ENCODE measurements at regions of chr17 and their contacts with region 1.

Region 1: DNA sequence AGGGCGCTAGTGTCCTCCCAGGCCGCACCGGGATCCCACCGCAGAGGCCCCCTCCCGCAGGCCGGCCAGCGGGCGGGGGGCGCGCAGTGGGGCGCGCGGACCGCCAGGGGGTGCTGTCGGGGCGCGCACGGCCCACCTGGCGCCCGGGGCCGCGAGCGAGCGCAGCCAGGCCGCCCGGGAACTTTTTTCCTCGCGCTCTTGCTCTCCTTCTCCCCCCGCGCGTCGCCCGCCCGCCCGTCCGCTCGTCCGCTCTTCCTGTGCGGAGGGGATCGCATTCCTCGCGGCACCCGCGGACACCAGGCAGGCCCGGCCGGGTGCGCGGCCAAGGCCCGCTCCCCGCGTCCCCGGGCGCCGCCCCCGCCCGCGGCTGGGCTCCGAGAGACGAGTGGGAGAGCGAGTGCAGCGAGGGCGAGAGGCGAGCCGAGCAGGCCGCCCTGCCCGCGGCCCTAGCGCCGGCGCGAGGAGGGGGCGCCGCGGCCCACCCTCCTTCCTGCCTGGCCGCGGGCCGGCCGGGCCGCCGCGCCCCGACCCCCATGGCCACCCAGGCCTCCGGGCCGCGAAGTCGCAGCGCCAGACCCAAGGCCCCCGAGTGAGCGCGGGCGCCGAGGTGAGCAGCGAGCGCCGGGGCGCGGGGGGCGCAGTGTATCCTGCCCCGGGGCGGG is at the start of gene RAI1:
- DNase-seq: peak; percentile 79
- ATAC-seq: peak; percentile 56
- H3K4me3 ChIP-seq: peak within 1 kb of the TSS; percentile 70
- H3K27ac ChIP-seq: peak within 1 kb of the TSS; percentile 81
- H3K4me1 ChIP-seq: peaks cover 18% of the 10 kb centered on the region
- H3K27me3 ChIP-seq: no peaks in the 10 kb centered on the region
- CTCF ChIP-seq: peak; percentile 83
- POLR2A ChIP-seq: peak; percentile 72
- RAD21 ChIP-seq: peak; percentile 80
- total RNA-seq, gene RAI1: 1.8 and 1.9 TPM in 2 replicates

Region 2: DNA sequence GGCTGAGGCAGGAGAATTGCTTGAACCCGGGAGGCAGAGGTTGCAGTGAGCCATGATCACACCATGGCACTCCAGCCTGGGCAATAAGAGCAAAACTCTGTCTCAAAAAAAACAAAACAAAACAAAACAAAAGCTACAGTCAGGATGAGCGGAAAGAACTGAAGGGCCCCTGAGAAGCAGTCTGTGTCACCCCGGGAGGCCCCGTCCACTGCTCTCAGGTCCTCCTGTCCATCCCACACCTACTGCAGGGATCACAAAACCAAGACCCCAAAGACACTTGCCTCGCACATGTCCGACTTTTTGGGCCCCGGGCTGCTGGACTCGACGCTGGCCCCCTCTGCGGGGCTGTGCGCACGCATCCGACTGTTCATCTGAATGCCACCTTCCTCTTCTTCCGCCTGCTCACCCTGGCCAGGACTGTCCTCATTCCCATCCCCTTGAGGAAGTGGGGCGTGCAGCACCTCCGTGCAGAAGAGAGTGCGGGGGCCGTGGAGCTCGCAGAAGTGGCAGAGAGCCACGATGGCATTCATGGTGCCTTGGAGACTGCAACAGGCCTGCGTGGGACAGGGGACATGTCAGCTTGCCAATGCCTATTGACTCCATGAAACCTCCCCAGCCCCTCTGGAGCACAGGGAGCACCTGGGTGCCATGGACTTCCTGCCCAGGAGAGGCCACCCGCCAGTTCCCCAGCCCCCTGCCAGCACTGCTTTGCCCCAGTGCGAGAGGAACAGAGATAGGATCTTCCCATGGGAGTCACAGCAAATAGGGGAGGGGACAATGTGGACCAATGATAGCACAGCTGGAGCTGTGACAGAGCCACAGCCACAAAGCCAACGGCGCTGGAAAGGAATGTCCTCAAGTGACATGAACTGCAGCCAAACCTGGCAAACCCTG is 453.5 kb before region 1 on chr17:
- CTCF ChIA-PET with region 1: no interaction called
- POLR2A ChIA-PET with region 1: no interaction called
- dilution Hi-C with region 1: no loop called
- in situ Hi-C with region 1: no loop called
- intact Hi-C with region 1: no loop called
- DNase-seq: no peak
- ATAC-seq: no peak
- H3K4me3 ChIP-seq: no peak overlapping the region
- H3K27ac ChIP-seq: no peak overlapping the region
- H3K4me1 ChIP-seq: no peaks in the 10 kb centered on the region
- H3K27me3 ChIP-seq: no peaks in the 10 kb centered on the region
- CTCF ChIP-seq: no peak
- POLR2A ChIP-seq: no peak
- RAD21 ChIP-seq: no peak

Region 3: DNA sequence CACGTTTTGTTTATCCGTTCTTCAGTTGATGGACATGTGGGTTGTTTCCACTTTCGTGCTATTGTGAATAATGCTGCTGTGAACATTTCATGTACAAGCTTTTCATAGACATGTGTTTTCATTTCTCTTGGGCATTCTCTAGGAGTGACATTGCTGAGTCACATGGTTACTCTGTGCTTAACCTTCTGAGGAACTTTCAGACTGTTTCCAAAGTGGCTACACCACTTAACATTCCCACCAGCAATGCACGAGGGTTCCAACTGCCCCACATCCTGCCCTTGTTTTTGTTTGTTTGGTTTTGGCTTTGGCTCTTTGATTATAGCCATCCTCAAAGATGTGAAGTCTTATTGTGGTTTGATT is 75.6 kb before region 1 on chr17:
- CTCF ChIA-PET with region 1: no interaction called
- POLR2A ChIA-PET with region 1: no interaction called
- dilution Hi-C with region 1: no loop called
- in situ Hi-C with region 1: no loop called
- intact Hi-C with region 1: no loop called
- DNase-seq: peak; percentile 58
- ATAC-seq: peak; percentile 62
- H3K4me3 ChIP-seq: no peak overlapping the region
- H3K27ac ChIP-seq: no peak overlapping the region
- H3K4me1 ChIP-seq: peaks cover 4% of the 10 kb centered on the region
- H3K27me3 ChIP-seq: peaks cover 7% of the 10 kb centered on the region; the same call in 1 of the 2 replicates
- CTCF ChIP-seq: no peak
- POLR2A ChIP-seq: no peak
- RAD21 ChIP-seq: no peak

Region 4: DNA sequence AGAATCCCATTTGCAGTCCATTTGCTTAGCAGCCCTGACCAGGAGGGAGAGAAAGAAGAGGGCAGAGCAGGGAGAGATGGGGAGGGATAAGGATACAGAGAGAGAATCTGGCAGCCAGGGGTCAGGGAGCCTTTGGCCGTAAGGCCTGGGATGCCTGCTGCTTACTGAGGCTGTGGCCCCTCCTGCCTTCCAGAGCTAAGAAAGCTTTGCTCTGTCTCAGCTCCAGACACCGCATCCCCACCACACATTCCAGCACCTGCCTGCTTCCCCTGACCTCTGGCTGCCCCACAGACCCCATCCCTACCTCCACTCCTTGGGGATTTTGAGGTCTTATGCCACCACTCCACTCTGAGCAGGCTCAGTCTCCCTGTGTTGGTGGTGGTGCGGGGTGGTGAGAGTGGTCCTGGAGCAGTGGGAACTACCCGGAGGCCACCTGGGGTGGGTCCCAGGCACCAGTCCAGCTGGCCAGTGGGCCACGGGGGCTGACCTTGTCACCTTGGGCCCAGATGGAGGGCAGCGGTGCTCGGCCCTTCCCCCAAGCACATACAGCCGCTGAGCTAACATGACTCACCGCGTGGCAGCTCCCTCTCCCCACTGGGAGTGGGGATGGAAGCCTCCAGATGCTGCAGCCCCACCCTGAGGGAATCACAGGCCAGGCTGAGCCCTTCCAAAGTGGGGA is 58.2 kb after region 1 on chr17:
- CTCF ChIA-PET with region 1: no interaction called
- POLR2A ChIA-PET with region 1: no interaction called
- dilution Hi-C with region 1: no loop called
- in situ Hi-C with region 1: no loop called
- intact Hi-C with region 1: loop called (anchors 5 kb)
- DNase-seq: peak; percentile 64
- ATAC-seq: peak; percentile 90
- H3K4me3 ChIP-seq: no peak overlapping the region
- H3K27ac ChIP-seq: peak overlapping the region; percentile 55
- H3K4me1 ChIP-seq: peaks cover 43% of the 10 kb centered on the region
- H3K27me3 ChIP-seq: no peaks in the 10 kb centered on the region
- CTCF ChIP-seq: no peak
- POLR2A ChIP-seq: no peak
- RAD21 ChIP-seq: 0 out of 2 replicates have a peak, but pooled peaks have one; percentile 6

Region 5: DNA sequence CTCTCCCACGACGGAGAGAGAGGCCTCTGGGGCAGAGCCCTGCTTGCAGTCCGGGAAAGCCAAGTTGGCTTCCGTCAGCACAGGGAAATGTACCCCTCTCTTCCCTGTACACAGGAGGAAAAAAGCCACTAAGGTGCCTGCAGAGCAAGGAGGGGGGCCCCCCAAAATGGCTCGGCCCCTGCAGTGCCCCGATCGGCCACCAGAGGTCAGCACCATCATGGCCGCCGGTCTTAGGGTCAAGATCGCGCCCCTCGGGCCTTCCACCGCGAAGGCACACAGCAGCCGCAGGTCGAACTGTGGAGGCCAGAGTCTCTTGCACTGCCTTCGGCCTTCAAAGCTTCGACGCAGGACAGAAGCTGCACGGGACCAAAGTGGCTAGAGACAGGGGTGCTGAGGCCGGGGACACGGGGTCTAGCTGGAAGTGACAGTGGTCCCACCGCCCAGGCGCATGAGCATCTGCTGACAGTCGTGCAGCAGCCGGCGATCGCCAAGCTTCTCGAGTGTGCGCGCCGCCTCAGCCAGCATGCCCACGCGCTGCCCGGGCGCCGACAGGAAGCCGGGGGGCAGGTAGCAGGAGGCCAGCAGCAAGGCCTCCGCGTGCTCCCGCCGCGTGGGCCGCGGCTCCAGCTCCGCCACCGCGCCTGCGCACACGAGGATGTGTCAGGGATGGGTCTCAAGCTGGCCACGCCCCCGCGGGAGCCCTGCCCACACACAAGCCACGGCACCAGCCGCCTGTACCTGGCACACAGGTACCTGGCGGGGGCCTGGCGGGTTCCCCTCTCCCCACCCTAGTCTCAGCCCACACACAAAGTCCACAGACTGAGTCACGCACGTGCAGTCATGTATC is 131.1 kb after region 1 on chr17:
- CTCF ChIA-PET with region 1: interaction called, 3 read pairs
- POLR2A ChIA-PET with region 1: no interaction called
- dilution Hi-C with region 1: no loop called
- in situ Hi-C with region 1: no loop called
- intact Hi-C with region 1: loop called (anchors 1 kb)
- DNase-seq: peak; percentile 41
- ATAC-seq: peak; percentile 67
- H3K4me3 ChIP-seq: no peak overlapping the region
- H3K27ac ChIP-seq: no peak overlapping the region
- H3K4me1 ChIP-seq: peaks cover 9% of the 10 kb centered on the region; the same call in 1 of the 2 replicates
- H3K27me3 ChIP-seq: no peaks in the 10 kb centered on the region
- CTCF ChIP-seq: peak; percentile 89
- POLR2A ChIP-seq: no peak
- RAD21 ChIP-seq: peak; percentile 77

Region 6: GRCh38 chr17:18033442-18034099 is 352.3 kb after region 1 on chr17:
- CTCF ChIA-PET with region 1: no interaction called
- POLR2A ChIA-PET with region 1: no interaction called
- dilution Hi-C with region 1: no loop called
- in situ Hi-C with region 1: loop called (anchors 10 kb)
- intact Hi-C with region 1: loop called (anchors 5 kb)
- DNase-seq: peak; percentile 87
- ATAC-seq: peak; percentile 94
- H3K4me3 ChIP-seq: no peak overlapping the region
- H3K27ac ChIP-seq: no peak overlapping the region
- H3K4me1 ChIP-seq: peaks cover 5% of the 10 kb centered on the region
- H3K27me3 ChIP-seq: no peaks in the 10 kb centered on the region
- CTCF ChIP-seq: peak; percentile 91
- POLR2A ChIP-seq: no peak
- RAD21 ChIP-seq: peak; percentile 96

Measured in IMR-90 (cell line).